ENCODE measurements at regions of chr11 and their contacts with region 1.

Region 1: DNA sequence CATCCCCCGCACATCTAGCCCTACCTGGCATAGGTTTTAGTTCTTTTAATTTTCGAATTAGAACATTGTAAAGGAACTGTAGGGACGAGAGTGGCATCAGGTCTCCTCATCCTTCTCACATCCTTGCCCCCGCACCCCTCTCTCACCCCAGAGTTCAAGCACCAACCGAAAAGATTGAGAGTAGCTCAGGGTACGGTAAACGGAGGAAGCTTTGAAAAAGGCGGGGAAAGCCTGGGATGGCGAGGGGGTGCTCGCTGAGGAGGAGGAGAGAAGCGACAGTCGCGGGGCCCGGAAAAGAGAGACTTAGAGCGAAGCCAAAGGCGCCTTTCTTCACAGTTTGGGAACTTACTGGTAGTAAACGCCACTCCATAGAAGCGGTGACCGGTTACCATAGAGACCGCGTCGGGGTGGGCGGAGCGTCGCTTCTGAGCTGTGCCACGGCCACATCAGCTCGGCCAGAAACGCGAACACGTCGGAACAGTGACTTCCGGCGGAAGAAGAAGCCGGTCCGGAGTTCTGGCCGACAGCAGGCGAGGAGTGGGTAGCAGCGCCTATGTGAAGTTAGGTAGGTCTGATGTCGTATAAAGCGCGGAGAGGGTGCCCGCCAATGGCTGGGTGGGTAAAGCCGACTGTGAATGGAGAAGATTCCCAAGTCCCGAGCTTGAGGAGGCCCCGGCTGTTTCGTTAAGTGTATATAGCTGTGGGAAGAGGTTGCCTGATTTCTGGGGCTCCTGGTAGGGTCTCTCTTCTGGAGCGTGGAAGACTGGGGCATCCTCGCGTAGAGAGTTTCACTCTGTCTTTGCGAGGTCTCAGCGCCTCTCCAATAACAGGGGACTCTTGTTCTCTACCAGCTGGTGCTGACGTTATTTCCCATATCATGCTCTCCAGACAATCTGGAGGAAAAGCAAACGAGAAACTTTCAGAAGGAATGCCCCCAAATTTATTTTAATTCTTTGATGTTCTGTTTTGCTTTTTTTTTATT is at the starts of genes DCDC1 and DNAJC24:
- DNase-seq: peak; percentile 93
- H3K4me3 ChIP-seq: peak within 1 kb of the TSS; percentile 79 to 90 (median 84)
- H3K27ac ChIP-seq: peak within 1 kb of the TSS; percentile 79
- H3K4me1 ChIP-seq: peaks cover 6% of the 10 kb centered on the region
- H3K27me3 ChIP-seq: peaks cover 9 to 31% of the 10 kb centered on the region in 2 experiments
- CTCF ChIP-seq: no peak
- POLR2A ChIP-seq: peak; percentile 83
- total RNA-seq, gene DCDC1: not detected in 2 replicates
- total RNA-seq, gene DNAJC24: 16.8 and 17.0 TPM in 2 replicates

Region 2: GRCh38 chr11:31340903-31341572 is 28.6 kb before region 1 on chr11:
- CTCF ChIA-PET with region 1: interaction called, 10 read pairs
- POLR2A ChIA-PET with region 1: no interaction called
- dilution Hi-C with region 1: no loop called
- intact Hi-C with region 1: no loop called
- DNase-seq: peak; percentile 43
- H3K4me3 ChIP-seq: no peak overlapping the region
- H3K27ac ChIP-seq: no peak overlapping the region
- H3K4me1 ChIP-seq: no peaks in the 10 kb centered on the region
- H3K27me3 ChIP-seq: peaks cover 3 to 4% of the 10 kb centered on the region in 2 experiments
- CTCF ChIP-seq: peak; percentile 49 to 70
- POLR2A ChIP-seq: no peak

Region 3: DNA sequence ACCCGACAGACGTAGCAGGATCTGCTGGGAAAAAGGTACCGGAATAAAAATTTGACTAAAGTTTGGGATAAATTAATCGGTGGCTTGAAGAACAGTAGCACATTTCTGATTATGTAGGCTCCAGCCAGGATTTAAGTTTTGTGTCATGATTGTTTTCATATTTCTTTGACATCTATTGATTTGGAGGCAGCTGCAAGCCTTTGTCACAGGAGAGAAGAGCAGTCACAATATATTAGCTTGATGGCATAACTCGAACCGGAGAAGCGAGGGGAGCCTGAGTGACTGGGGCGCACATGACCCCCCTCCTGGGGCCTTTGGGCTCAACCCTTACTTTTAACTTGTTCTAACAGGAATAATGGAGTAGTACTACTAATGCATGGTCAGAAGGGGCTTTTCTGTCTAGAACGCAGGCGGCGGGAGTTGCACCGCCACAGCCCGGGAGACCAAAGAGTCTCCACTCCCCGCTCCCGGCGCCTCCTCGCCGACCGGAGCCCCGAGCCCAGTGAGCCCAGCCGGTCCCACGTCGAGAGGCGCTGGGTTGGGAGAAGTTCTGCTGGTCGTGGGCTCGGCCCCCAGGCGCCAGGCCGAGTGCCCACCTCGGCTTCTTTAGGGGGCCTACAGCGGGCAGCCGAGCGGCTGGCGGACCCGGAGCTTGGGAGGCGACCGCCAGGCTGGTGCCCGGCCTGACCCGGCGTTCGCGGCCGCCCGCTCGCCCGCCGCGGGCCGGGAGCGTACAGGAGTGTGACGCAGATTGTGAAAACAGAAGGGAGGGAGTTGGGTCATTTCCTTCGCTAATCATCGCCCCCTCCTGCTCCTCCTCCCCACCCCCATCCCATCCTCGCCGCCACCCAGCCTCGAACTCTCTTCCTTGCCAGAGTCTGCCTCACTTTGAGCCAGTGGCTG is 457.1 kb after region 1 on chr11:
- CTCF ChIA-PET with region 1: no interaction called
- POLR2A ChIA-PET with region 1: no interaction called
- dilution Hi-C with region 1: no loop called
- intact Hi-C with region 1: loop called (anchors 5 kb)
- DNase-seq: no peak
- H3K4me3 ChIP-seq: no peak overlapping the region
- H3K27ac ChIP-seq: no peak overlapping the region
- H3K4me1 ChIP-seq: peaks cover 3% of the 10 kb centered on the region
- H3K27me3 ChIP-seq: peaks cover 78 to 98% of the 10 kb centered on the region in 2 experiments
- CTCF ChIP-seq: no peak
- POLR2A ChIP-seq: no peak

Measured in endothelial cell of umbilical vein (primary cell).